ENCODE measurements at regions of chrX and their contacts with region 1.

Region 1: GRCh38 chrX:13891377-13892140 is 74.7 kb upstream of the GPM6B start:
- DNase-seq: no peak
- H3K4me3 Mint-ChIP-seq: peak overlapping the region; percentile 5
- H3K27ac Mint-ChIP-seq: no peak overlapping the region
- H3K4me1 Mint-ChIP-seq: peaks cover 11% of the 10 kb centered on the region
- H3K27me3 Mint-ChIP-seq: peaks cover 54% of the 10 kb centered on the region
- CTCF ChIP-seq: no peak

Region 2: GRCh38 chrX:13803116-13803515 is 88.4 kb before region 1 on chrX:
- CTCF ChIA-PET with region 1: no interaction called
- POLR2A ChIA-PET with region 1: no interaction called
- intact Hi-C with region 1: no loop called
- DNase-seq: no peak
- H3K4me3 Mint-ChIP-seq: no peak overlapping the region
- H3K27ac Mint-ChIP-seq: no peak overlapping the region
- H3K4me1 Mint-ChIP-seq: no peaks in the 10 kb centered on the region
- H3K27me3 Mint-ChIP-seq: peaks cover 83% of the 10 kb centered on the region
- CTCF ChIP-seq: no peak

Region 3: DNA sequence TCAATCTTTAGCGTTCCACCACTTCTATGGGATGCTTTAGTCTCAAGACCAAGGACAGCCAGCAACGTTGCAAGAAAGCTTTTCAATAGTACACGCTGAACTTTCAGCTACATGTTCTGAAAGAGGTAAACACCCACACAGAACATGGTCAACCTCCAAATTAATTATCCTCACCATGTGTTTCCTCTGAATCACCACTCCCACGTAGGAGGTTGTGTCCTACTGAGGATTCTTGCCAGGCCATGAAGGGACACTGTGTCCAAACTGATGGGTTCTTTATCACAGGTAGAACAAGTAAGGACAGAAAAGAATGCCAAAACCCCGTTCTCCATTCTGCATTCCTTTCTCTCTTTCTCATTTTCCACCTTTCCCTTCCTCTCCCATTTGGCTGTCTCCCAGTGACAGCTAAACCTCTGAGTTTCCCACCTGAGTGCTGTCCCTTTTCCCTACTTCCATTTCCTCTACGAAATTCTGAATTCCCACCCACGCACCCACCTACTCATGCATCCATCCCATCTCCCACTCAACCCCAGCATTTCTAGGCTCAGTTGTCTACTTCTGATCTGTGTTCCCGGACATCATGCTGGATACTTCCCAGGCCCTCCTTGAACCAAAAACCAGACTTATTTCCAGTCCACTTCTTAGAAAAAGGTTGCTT is 45.7 kb before region 1 on chrX:
- CTCF ChIA-PET with region 1: interaction called, 5 read pairs
- POLR2A ChIA-PET with region 1: interaction called, 12 read pairs
- intact Hi-C with region 1: no loop called
- DNase-seq: peak; percentile 95
- H3K4me3 Mint-ChIP-seq: no peak overlapping the region
- H3K27ac Mint-ChIP-seq: peak overlapping the region; percentile 43
- H3K4me1 Mint-ChIP-seq: peaks cover 7% of the 10 kb centered on the region
- H3K27me3 Mint-ChIP-seq: peaks cover 48% of the 10 kb centered on the region
- CTCF ChIP-seq: no peak

Region 4: DNA sequence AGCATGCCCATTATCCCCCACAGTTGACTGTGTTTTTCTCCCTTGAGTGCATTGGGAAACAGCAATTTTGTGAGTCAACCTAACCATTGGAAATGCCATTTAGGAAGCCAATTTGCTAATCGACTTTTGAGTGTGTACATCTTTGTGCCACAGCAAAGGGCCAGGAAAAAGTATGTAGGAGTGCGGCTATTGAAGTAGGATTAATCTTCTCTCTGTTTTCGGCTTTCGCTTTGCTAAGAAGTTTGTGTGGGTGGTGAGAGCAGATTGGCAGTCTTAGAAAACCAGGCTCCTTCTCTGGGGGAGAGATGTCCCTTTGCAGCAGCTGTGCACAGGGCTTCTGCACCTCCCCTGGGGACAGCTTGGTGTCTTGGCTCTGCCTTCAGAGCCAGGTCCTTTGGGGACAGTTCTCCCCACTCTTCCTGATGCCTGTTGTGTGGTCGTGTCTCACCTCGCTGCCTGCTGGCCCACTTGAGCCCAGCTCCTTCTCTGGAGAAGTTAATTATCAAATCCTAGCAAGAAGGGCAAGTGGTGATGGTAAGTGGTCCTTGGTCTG is 63.6 kb after region 1 on chrX:
- CTCF ChIA-PET with region 1: no interaction called
- POLR2A ChIA-PET with region 1: no interaction called
- intact Hi-C with region 1: no loop called
- DNase-seq: no peak
- H3K4me3 Mint-ChIP-seq: no peak overlapping the region
- H3K27ac Mint-ChIP-seq: no peak overlapping the region
- H3K4me1 Mint-ChIP-seq: no peaks in the 10 kb centered on the region
- H3K27me3 Mint-ChIP-seq: peaks cover 79% of the 10 kb centered on the region
- CTCF ChIP-seq: no peak

Measured in MCF 10A (cell line).